Activated CD4-positive, alpha-beta T cell treated with anti-CD3 and anti-CD28 coated beads for 36 hours (primary cell): ENCODE measurements at regions of chr3 and their contacts with region 1.

Region 1: DNA sequence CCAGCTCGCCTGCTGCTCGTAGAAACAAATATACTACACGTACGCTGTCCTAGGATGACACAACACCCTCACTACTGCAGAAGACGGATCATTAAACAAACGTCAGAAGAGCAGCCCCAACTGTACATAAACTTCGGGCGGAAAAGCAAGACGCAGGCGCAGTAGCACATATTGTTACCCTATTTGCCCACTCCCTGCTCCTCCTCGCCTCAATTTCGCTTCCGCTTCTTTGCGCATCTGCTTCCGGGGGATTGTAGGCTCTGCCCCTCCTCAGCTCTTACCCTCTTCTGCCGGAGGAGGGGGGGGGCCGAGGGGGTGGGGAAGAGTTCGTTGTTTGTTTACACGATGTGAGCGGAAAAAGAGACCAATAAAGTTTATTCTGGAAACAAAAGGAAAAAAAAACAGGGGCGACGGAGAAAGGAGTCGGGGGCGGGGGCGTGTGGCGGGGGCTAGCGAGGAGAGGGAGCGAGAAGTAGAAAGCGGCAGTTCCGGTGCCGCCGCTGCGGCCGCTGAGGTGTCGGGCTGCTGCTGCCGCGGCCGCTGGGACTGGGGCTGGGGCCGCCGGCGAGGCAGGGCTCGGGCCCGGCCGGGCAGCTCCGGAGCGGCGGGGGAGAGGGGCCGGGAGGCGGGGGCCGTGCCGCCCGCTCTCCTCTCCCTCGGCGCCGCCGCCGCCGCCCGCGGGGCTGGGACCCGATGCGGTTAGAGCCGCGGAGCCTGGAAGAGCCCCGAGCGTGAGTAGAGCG is at the start of gene PIK3CA:
- DNase-seq: peak; percentile 95
- ATAC-seq: peak; percentile 79
- H3K4me3 Mint-ChIP-seq: no peak within 1 kb of the TSS
- H3K27ac Mint-ChIP-seq: peak within 1 kb of the TSS; percentile 94
- H3K4me1 Mint-ChIP-seq: peaks cover 39% of the 10 kb centered on the region
- H3K27me3 Mint-ChIP-seq: peaks cover 3% of the 10 kb centered on the region
- total RNA-seq, gene PIK3CA: 15.5 to 17.7 TPM

Region 2: DNA sequence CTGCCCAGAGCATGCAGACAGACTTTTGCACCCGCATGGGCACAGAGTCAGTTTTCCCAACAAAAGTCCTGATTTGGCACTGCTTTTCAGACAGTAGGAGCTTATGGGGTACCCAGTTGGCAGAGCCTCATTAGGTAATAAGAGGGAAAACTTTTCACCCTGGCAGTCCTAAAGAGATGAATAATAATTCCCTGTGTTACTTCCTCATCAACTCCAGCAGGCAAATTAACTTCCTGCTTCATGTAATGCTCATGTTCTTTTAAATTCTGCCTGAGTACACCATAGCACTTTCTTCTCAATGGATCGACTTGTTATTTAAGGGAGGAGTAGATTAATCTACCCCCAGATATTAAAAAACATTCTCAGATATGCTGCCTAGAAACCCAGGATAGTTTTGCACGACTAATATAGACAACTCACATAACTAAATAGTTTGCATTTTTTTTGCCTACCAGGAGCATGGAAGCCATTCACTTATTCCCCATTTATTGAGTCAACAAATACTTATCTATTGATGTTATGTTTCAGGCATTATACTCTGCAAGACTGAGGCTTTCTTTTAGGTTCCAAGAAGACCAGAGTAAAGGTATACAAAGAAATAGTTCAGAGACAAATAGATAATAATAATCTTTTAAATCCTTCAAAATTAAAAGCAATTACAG is 397.3 kb before region 1 on chr3:
- CTCF ChIA-PET with region 1: no interaction called
- POLR2A ChIA-PET with region 1: no interaction called
- intact Hi-C with region 1: no loop called
- DNase-seq: no peak
- ATAC-seq: no peak
- H3K4me3 Mint-ChIP-seq: no peak overlapping the region
- H3K27ac Mint-ChIP-seq: no peak overlapping the region
- H3K4me1 Mint-ChIP-seq: no peaks in the 10 kb centered on the region
- H3K27me3 Mint-ChIP-seq: peaks cover 3% of the 10 kb centered on the region

Region 3: GRCh38 chr3:179015551-179016020 is 132.5 kb before region 1 on chr3:
- CTCF ChIA-PET with region 1: interaction called, 5 read pairs
- POLR2A ChIA-PET with region 1: no interaction called
- intact Hi-C with region 1: loop called (anchors 1 kb)
- DNase-seq: peak; percentile 65
- ATAC-seq: peak; percentile 83
- H3K4me3 Mint-ChIP-seq: no peak overlapping the region
- H3K27ac Mint-ChIP-seq: no peak overlapping the region
- H3K4me1 Mint-ChIP-seq: peaks cover 35% of the 10 kb centered on the region
- H3K27me3 Mint-ChIP-seq: peaks cover 4% of the 10 kb centered on the region

Region 4: GRCh38 chr3:179196098-179196497 is 48.1 kb after region 1 on chr3:
- CTCF ChIA-PET with region 1: no interaction called
- POLR2A ChIA-PET with region 1: no interaction called
- intact Hi-C with region 1: loop called (anchors 1 to 5 kb)
- DNase-seq: peak; percentile 8
- ATAC-seq: peak; percentile 78
- H3K4me3 Mint-ChIP-seq: no peak overlapping the region
- H3K27ac Mint-ChIP-seq: no peak overlapping the region
- H3K4me1 Mint-ChIP-seq: peaks cover 57% of the 10 kb centered on the region
- H3K27me3 Mint-ChIP-seq: no peaks in the 10 kb centered on the region

Region 5: GRCh38 chr3:179322286-179323196 is 174.5 kb after region 1 on chr3 and contains the start of gene ZNF639:
- CTCF ChIA-PET with region 1: interaction called, 6 read pairs
- POLR2A ChIA-PET with region 1: interaction called, 3 read pairs
- intact Hi-C with region 1: loop called (anchors 1 to 2 kb)
- DNase-seq: peak; percentile 91
- ATAC-seq: peak; percentile 78
- H3K4me3 Mint-ChIP-seq: peak within 1 kb of the TSS; percentile 87
- H3K27ac Mint-ChIP-seq: peak within 1 kb of the TSS; percentile 93
- H3K4me1 Mint-ChIP-seq: peaks cover 28% of the 10 kb centered on the region
- H3K27me3 Mint-ChIP-seq: no peaks in the 10 kb centered on the region
- total RNA-seq, gene ZNF639: 31.0 to 39.6 TPM

Region 6: GRCh38 chr3:179562591-179563270 is 414.7 kb after region 1 on chr3 and contains the start of gene ACTL6A:
- CTCF ChIA-PET with region 1: no interaction called
- POLR2A ChIA-PET with region 1: interaction called, 5 read pairs
- intact Hi-C with region 1: loop called (anchors 1 to 2 kb)
- DNase-seq: peak; percentile 99
- ATAC-seq: peak; percentile 92
- H3K4me3 Mint-ChIP-seq: peak within 1 kb of the TSS; percentile 83
- H3K27ac Mint-ChIP-seq: peak within 1 kb of the TSS; percentile 96
- H3K4me1 Mint-ChIP-seq: peaks cover 26% of the 10 kb centered on the region
- H3K27me3 Mint-ChIP-seq: peaks cover 6% of the 10 kb centered on the region
- total RNA-seq, gene ACTL6A: 85.3 to 113 TPM

Region 7: DNA sequence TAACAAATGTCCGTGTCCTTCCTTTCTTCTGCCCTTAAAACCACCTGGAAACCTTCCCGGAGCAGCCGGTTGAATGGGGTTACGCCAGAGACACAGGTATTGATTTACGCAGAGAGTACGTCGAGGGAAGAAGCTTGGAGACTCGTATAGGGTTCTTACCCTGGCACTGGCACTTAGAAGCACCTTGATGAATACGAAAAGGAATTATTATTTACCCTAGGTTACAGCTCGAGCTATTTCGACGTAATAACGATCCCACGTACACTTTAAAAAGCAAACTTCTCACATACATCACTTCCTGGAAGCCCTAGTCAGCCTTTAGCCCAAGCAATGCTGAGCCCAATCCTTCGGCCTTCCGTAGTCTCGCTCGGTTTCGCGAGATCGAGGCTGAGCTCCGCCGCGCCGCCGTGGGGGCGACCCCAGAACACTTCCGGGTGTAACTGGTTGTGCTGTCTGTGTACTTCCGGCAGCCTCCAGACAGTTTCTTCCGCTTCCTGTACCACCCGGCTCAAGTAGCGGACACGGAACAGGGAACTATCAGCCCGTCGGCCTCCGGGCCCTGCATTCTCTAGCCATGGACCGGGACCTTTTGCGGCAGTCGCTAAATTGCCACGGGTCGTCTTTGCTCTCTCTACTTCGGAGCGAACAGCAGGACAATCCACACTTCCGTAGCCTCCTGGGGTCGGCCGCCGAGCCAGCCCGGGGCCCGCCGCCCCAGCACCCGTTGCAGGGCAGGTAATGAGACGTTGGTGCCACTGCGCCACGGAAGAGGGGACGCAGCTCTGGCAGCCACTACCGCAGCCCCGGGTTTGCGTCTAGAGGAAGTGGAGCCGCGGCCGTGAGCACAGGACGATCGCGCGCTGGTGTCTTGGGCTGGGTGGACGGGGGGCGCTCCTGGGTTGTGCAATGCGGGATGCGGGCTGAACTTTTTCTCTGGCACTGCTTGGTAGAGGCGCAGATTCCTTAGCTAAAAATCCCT is 1453.9 kb after region 1 on chr3 and contains the start of gene TTC14:
- CTCF ChIA-PET with region 1: no interaction called
- POLR2A ChIA-PET with region 1: no interaction called
- intact Hi-C with region 1: loop called in 1 of 2 experiments (anchors 2 kb)
- DNase-seq: peak; percentile 96
- ATAC-seq: peak; percentile 96
- H3K4me3 Mint-ChIP-seq: peak within 1 kb of the TSS; percentile 98
- H3K27ac Mint-ChIP-seq: peak within 1 kb of the TSS; percentile 98
- H3K4me1 Mint-ChIP-seq: peaks cover 17% of the 10 kb centered on the region
- H3K27me3 Mint-ChIP-seq: peaks cover 4% of the 10 kb centered on the region
- total RNA-seq, gene TTC14: 38.0 to 41.2 TPM